Thyroid gland (tissue), 4 donors: ENCODE measurements at regions of chr17 and their contacts with region 1.

Region 1: GRCh38 chr17:47840740-47841603 is at the start of gene SCRN2:
- DNase-seq: peak; percentile 91 to 92
- H3K4me3 ChIP-seq: peak within 1 kb of the TSS; percentile 50 to 77 (median 53)
- H3K27ac ChIP-seq: peak within 1 kb of the TSS; percentile 34 to 63 (median 62)
- H3K4me1 ChIP-seq: peaks cover 11 to 26% of the 10 kb centered on the region in 2 donors
- H3K27me3 ChIP-seq: no peaks in the 10 kb centered on the region
- CTCF ChIP-seq: peak in 5 of 6 experiments; percentile 93 to 99 (median 98)
- POLR2A ChIP-seq: peak in 1 of 2 donors; percentile 59
- total RNA-seq, gene SCRN2: 37.0 to 71.5 (median 49.1) TPM

Region 2: DNA sequence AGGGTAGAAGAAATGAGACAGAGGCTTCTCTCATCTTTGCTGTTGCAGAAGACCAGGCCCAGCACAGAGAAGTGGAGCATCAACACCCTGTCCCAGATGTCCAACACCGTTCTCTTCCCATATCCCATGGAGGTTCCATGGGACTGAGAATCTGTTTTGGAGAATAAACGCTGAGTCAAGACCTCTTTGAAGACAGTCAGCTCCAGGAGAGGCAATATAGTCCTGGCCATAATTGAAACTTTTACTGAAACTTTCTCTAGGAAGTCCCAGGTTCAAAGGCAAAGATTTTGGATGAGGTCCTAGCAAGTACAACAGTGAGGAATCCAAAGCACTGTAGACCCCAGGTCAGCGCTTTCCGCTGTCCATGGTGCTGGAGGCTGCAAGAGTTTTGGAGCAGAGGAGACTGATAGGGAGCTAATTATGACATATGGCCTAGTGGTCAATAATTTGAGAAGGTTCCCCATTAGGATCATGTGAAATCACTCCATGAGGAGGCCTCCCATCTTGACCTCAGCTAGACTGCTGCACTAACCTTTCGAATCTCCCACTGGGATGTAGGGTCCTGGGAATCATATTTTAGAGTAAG is 55.3 kb before region 1 on chr17:
- intact Hi-C with region 1: no loop called
- DNase-seq: peak in 1 of 2 donors; percentile 32
- H3K4me3 ChIP-seq: no peak overlapping the region
- H3K27ac ChIP-seq: no peak overlapping the region
- H3K4me1 ChIP-seq: peaks cover 0 to 8% of the 10 kb centered on the region in 2 donors
- H3K27me3 ChIP-seq: peaks cover 3% of the 10 kb centered on the region
- CTCF ChIP-seq: no peak
- POLR2A ChIP-seq: no peak

Region 3: DNA sequence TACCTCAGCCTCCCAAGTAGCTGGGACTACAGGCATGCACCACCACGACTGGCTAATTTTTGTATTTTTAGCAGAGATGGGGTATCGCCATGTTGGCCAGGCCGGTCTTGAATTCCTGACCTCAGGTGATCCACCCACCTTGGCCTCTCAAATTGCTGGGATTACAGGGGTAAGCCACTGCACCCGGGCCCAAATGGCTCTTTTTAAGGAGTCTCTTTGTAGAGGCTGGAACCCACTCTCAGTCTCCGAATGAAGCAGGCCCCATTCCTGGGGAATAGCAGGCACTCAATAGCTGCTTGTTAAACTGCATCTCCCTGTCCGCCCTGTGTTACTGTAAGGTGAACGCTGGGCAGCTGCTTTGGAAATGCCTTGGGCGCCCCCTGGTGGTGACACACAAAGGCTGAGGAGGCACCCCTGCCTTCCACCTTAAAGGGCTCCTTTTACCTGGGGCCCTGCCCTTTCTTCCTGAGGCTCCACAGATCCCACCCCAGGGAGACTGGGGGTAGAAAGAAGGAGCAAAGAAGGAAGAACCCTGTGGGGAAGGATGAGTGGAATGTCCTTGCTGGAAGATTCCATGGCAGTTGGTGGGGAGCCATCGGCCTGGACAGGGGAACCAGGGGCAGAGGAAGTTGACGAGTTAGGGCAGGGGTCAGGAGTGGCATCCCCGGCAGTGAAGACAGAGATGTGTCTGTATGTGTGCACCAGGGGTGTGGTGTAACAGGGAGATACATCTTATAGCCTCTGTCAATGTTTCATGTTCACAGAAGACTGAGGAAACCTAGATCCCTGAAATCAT is 49.0 kb after region 1 on chr17:
- intact Hi-C with region 1: loop called (anchors 2 kb)
- DNase-seq: peak; percentile 88 to 91
- H3K4me3 ChIP-seq: no peak overlapping the region
- H3K27ac ChIP-seq: no peak overlapping the region
- H3K4me1 ChIP-seq: peaks cover 6 to 20% of the 10 kb centered on the region in 2 donors
- H3K27me3 ChIP-seq: no peaks in the 10 kb centered on the region
- CTCF ChIP-seq: peak; percentile 82 to 95 (median 92)
- POLR2A ChIP-seq: no peak

Region 4: DNA sequence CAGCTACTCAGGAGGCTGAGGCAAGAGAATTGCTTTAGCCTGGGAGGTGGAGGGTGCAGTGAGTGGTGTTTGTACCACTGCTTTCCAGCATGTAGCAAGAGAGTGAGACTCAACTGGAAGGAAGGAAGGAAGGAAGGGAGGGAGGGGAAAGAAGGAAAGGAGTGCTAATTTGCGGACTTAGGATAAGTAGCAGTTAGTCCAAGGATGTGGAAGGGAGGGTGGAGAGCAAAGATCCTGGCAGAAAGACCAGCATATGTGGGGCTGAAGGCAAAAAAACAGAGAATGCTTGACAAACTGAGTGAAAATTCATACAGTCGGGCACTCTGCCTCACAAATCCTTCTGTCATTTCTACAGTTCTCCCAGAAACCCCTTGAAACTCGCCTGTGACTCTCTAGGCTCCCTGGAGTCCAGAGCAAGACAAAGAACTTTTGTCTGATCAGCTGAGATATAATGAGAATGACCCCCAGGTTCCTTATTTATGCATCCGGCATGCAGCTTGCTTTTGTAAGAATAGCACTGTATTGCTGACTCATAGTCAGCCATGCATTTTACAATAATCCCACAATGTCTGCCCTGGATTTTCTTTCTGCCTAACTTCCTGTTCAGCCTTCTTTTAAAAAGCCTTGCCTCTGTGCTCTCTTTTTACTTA is 161.4 kb after region 1 on chr17:
- intact Hi-C with region 1: no loop called
- DNase-seq: no peak
- H3K4me3 ChIP-seq: no peak overlapping the region
- H3K27ac ChIP-seq: peak overlapping the region; percentile 67 to 86 (median 81)
- H3K4me1 ChIP-seq: peaks cover 10 to 30% of the 10 kb centered on the region in 2 donors
- H3K27me3 ChIP-seq: no peaks in the 10 kb centered on the region
- CTCF ChIP-seq: no peak
- POLR2A ChIP-seq: no peak